ENCODE measurements at regions of chr9 and their contacts with region 1.

Region 1: DNA sequence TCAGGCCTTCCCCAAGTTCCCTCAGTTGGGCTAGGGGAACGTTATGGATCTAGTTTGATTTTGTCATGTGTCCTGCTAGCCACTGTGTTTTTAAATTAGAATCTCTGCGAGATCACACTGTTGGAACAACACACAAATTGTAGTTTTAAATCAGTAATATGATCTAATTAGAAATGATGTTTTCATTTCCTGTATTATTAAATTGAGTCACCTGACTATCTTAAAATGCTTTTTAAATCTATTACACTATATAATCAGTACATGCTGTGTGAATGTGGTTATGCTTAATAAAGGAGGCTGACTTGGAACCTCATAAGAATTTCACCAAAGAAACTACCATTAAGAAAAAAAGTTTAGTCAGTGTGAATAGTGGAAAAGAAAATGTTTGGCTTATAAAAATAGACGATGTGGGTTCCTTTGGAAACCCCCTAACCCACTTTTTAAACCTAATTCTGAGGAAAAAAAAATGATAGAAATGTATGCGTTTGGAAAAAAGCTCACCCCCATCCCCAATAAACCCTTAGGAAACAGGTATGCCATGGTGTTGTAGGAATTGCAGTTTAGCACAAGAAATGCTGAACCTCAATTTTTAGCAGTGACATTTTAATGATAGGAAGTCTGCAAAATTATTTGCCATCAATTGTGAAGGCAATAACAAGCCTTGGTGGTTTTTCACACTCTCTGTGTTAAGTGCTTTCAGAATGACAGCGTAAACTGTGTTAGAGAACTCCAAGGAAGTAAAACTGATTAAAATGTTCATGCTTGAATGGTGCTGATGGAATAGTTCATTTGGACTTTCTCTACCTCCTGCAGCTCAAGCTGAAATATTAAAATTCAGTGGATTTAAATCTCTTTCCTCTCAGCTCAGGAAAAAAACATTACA is 59.0 kb downstream of the TLE4 start:
- DNase-seq: peak in 1 of 14 experiments; percentile 50
- ATAC-seq: no peak
- H3K4me3 ChIP-seq: no peak overlapping the region
- H3K4me3 Mint-ChIP-seq: no peak overlapping the region
- H3K27ac ChIP-seq: no peak overlapping the region
- H3K27ac Mint-ChIP-seq: no peak overlapping the region
- H3K4me1 ChIP-seq: peaks cover 18% of the 10 kb centered on the region
- H3K4me1 Mint-ChIP-seq: peaks cover 75% of the 10 kb centered on the region
- H3K27me3 ChIP-seq: no peaks in the 10 kb centered on the region
- H3K27me3 Mint-ChIP-seq: no peaks in the 10 kb centered on the region
- CTCF ChIP-seq: no peak

Region 2: GRCh38 chr9:79592726-79593493 is 37.9 kb before region 1 on chr9:
- CTCF ChIA-PET with region 1: no interaction called
- POLR2A ChIA-PET with region 1: no interaction called
- intact Hi-C with region 1: loop called in 1 of 2 experiments (anchors 5 kb)
- DNase-seq: peak in 4 of 14 experiments; percentile 26 to 75 (median 63)
- ATAC-seq: peak; percentile 91
- H3K4me3 ChIP-seq: no peak overlapping the region
- H3K4me3 Mint-ChIP-seq: peak overlapping the region; percentile 76
- H3K27ac ChIP-seq: no peak overlapping the region
- H3K27ac Mint-ChIP-seq: peak overlapping the region; percentile 72
- H3K4me1 ChIP-seq: peaks cover 14% of the 10 kb centered on the region
- H3K4me1 Mint-ChIP-seq: peaks cover 87% of the 10 kb centered on the region
- H3K27me3 ChIP-seq: no peaks in the 10 kb centered on the region
- H3K27me3 Mint-ChIP-seq: no peaks in the 10 kb centered on the region
- CTCF ChIP-seq: no peak

Measured in CD4-positive, alpha-beta T cell (primary cell).